HepG2 (cell line): ENCODE measurements at regions of chr11 and their contacts with region 1.

Region 1: GRCh38 chr11:67401495-67402191 is at the start of gene PPP1CA:
- DNase-seq: peak; percentile 75
- ATAC-seq: peak; percentile 78
- H3K4me3 ChIP-seq: peak within 1 kb of the TSS; percentile 77 to 98 (median 94)
- H3K27ac ChIP-seq: peak within 1 kb of the TSS; percentile 84
- H3K4me1 ChIP-seq: peaks cover 58% of the 10 kb centered on the region
- H3K27me3 ChIP-seq: no peaks in the 10 kb centered on the region
- CTCF ChIP-seq: peak; percentile 63
- EP300 ChIP-seq: no peak
- POLR2A ChIP-seq: peak; percentile 69 to 92
- RAD21 ChIP-seq: peak; percentile 84
- total RNA-seq, gene PPP1CA: 170 and 188 TPM in 2 replicates

Region 2: GRCh38 chr11:67126986-67127385 is 274.7 kb before region 1 on chr11:
- CTCF ChIA-PET with region 1: no interaction called
- POLR2A ChIA-PET with region 1: no interaction called
- in situ Hi-C with region 1: no loop called
- intact Hi-C with region 1: no loop called
- DNase-seq: no peak
- ATAC-seq: no peak
- H3K4me3 ChIP-seq: no peak overlapping the region
- H3K27ac ChIP-seq: no peak overlapping the region
- H3K4me1 ChIP-seq: peaks cover 39% of the 10 kb centered on the region
- H3K27me3 ChIP-seq: no peaks in the 10 kb centered on the region; a peak in 1 of 5 replicates
- CTCF ChIP-seq: no peak
- EP300 ChIP-seq: no peak
- POLR2A ChIP-seq: no peak
- RAD21 ChIP-seq: no peak

Region 3: GRCh38 chr11:67353317-67354074 is 48.1 kb before region 1 on chr11 and contains the start of gene POLD4:
- CTCF ChIA-PET with region 1: no interaction called
- POLR2A ChIA-PET with region 1: interaction called, 42 read pairs
- in situ Hi-C with region 1: no loop called
- intact Hi-C with region 1: no loop called
- DNase-seq: peak; percentile 89
- ATAC-seq: peak; percentile 82
- H3K4me3 ChIP-seq: peak within 1 kb of the TSS; percentile 68 to 90 (median 71)
- H3K27ac ChIP-seq: peak within 1 kb of the TSS; percentile 79
- H3K4me1 ChIP-seq: peaks cover 46% of the 10 kb centered on the region
- H3K27me3 ChIP-seq: no peaks in the 10 kb centered on the region
- CTCF ChIP-seq: no peak; the same call in 1 of the 2 replicates
- EP300 ChIP-seq: 0 out of 4 replicates have a peak, but pooled peaks of 1 of the 2 experiments have one; percentile 11
- POLR2A ChIP-seq: peak; percentile 68 to 85
- RAD21 ChIP-seq: no peak
- total RNA-seq, gene POLD4: 10.5 and 10.9 TPM in 2 replicates

Region 4: GRCh38 chr11:67391304-67392132 is 10.1 kb before region 1 on chr11 and contains the start of gene RAD9A:
- CTCF ChIA-PET with region 1: no interaction called
- POLR2A ChIA-PET with region 1: interaction called, 81 read pairs
- in situ Hi-C with region 1: no loop called
- intact Hi-C with region 1: no loop called
- DNase-seq: peak; percentile 90
- ATAC-seq: peak; percentile 86
- H3K4me3 ChIP-seq: peak within 1 kb of the TSS; percentile 74 to 85 (median 78)
- H3K27ac ChIP-seq: peak within 1 kb of the TSS; percentile 82
- H3K4me1 ChIP-seq: peaks cover 43% of the 10 kb centered on the region
- H3K27me3 ChIP-seq: peaks cover 1 to 9% of the 10 kb centered on the region in 2 experiments; a peak in 3 of 5 replicates
- CTCF ChIP-seq: peak; percentile 26; the same call in 1 of the 2 replicates
- EP300 ChIP-seq: no peak
- POLR2A ChIP-seq: peak; percentile 84 to 95
- RAD21 ChIP-seq: 0 out of 2 replicates have a peak, but pooled peaks have one; percentile 34
- total RNA-seq, gene RAD9A: 6.1 and 10.1 TPM in 2 replicates

Region 5: GRCh38 chr11:67420646-67421420 is 19.2 kb after region 1 on chr11:
- CTCF ChIA-PET with region 1: no interaction called
- POLR2A ChIA-PET with region 1: interaction called, 78 read pairs
- in situ Hi-C with region 1: no loop called
- intact Hi-C with region 1: no loop called
- DNase-seq: peak; percentile 81
- ATAC-seq: peak; percentile 80
- H3K4me3 ChIP-seq: peak overlapping the region; percentile 30 to 70 (median 53); a peak in 5 of 6 replicates
- H3K27ac ChIP-seq: no peak overlapping the region
- H3K4me1 ChIP-seq: peaks cover 69% of the 10 kb centered on the region
- H3K27me3 ChIP-seq: peaks cover 5 to 36% of the 10 kb centered on the region in 2 experiments; a peak in 4 of 5 replicates
- CTCF ChIP-seq: no peak; the same call in 1 of the 2 replicates
- EP300 ChIP-seq: no peak
- POLR2A ChIP-seq: peak in 1 of 2 experiments; percentile 77; a peak in 3 of 4 replicates
- RAD21 ChIP-seq: peak; percentile 50

Region 6: DNA sequence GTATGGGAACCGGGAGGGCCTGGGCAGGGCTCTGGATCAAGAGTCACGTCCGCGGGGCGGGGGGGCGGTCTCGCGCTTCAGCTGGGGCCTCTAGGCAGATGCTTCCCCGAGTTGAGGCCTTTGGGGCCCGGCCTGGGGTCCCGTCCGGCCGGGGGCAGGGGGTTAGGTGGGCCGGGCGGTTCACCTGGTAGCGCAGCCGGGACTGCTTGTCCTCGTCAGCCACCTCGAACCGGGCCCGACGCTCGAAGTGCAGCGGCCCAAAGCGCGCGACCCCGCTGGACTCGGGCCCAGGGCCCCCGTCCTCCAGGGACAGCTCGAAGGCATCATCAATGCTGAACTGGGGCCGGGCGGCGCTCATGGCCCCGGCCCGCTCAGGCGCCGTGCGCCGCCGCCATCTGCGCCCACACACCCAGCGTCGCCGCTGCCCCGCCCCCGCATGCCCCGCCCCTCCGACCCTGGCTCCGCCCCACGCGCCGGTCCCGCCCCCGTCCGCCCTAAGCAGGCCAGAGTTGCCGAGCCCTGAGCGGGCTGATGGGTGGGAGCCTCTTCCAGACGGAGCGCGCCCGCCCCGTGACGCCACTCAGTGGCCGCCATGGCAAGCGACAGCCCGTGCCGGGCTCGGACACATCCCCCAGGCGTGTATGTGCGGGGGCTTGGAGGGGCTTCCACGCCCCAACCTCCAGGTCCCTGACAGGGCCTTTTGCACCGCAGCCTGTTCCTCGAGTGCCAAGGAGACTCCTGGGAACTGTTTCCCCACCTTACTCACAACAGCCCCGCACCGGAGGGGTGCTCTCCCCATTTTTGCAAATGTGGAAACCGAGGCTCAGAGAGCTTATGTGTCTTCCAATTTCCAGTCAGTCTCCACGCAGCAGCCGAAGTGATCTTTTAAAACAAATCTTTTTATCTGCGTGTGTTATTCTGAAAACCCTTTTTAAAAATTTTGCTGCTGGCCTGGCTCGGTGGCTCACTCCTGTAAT is 67.5 kb after region 1 on chr11 and contains the start of gene TMEM134:
- CTCF ChIA-PET with region 1: no interaction called
- POLR2A ChIA-PET with region 1: interaction called, 22 read pairs
- in situ Hi-C with region 1: loop called (anchors 5 kb)
- intact Hi-C with region 1: no loop called
- DNase-seq: peak; percentile 81
- ATAC-seq: peak; percentile 79
- H3K4me3 ChIP-seq: peak within 1 kb of the TSS; percentile 81 to 87 (median 81)
- H3K27ac ChIP-seq: peak within 1 kb of the TSS; percentile 56
- H3K4me1 ChIP-seq: peaks cover 69% of the 10 kb centered on the region
- H3K27me3 ChIP-seq: no peaks in the 10 kb centered on the region
- CTCF ChIP-seq: peak; percentile 90
- EP300 ChIP-seq: peak in 1 of 2 experiments; percentile 26; a peak in 2 of 4 replicates
- POLR2A ChIP-seq: peak; percentile 73 to 83
- RAD21 ChIP-seq: peak; percentile 89
- total RNA-seq, gene TMEM134: 5.1 and 6.9 TPM in 2 replicates

Region 7: GRCh38 chr11:67507864-67508485 is 106.3 kb after region 1 on chr11 and contains the start of gene CDK2AP2:
- CTCF ChIA-PET with region 1: interaction called, 6 read pairs
- POLR2A ChIA-PET with region 1: interaction called, 6 read pairs
- in situ Hi-C with region 1: loop called (anchors 5 kb)
- intact Hi-C with region 1: no loop called
- DNase-seq: peak; percentile 98
- ATAC-seq: peak; percentile 85
- H3K4me3 ChIP-seq: peak within 1 kb of the TSS; percentile 74 to 98 (median 91)
- H3K27ac ChIP-seq: peak within 1 kb of the TSS; percentile 96
- H3K4me1 ChIP-seq: peaks cover 56% of the 10 kb centered on the region
- H3K27me3 ChIP-seq: no peaks in the 10 kb centered on the region
- CTCF ChIP-seq: peak; percentile 24; the same call in 1 of the 2 replicates
- EP300 ChIP-seq: no peak
- POLR2A ChIP-seq: no peak; a peak in 1 of 4 replicates
- RAD21 ChIP-seq: no peak
- total RNA-seq, gene CDK2AP2: 19.7 and 23.2 TPM in 2 replicates